ENCODE measurements at regions of chr2 and their contacts with region 1.

Region 1: GRCh38 chr2:169131587-169132512 is 62.5 kb downstream of the DHRS9 start:
- DNase-seq: no peak
- ATAC-seq: peak; percentile 96
- H3K4me3 Mint-ChIP-seq: no peak overlapping the region
- H3K27ac Mint-ChIP-seq: no peak overlapping the region
- H3K4me1 Mint-ChIP-seq: peaks cover 2% of the 10 kb centered on the region
- H3K27me3 Mint-ChIP-seq: no peaks in the 10 kb centered on the region
- CTCF ChIP-seq: peak; percentile 88

Region 2: GRCh38 chr2:168976034-168976654 is 155.7 kb before region 1 on chr2:
- CTCF ChIA-PET with region 1: interaction called, 12 read pairs
- POLR2A ChIA-PET with region 1: no interaction called
- intact Hi-C with region 1: no loop called
- DNase-seq: peak; percentile 7
- ATAC-seq: peak; percentile 50
- H3K4me3 Mint-ChIP-seq: no peak overlapping the region
- H3K27ac Mint-ChIP-seq: no peak overlapping the region
- H3K4me1 Mint-ChIP-seq: no peaks in the 10 kb centered on the region
- H3K27me3 Mint-ChIP-seq: no peaks in the 10 kb centered on the region
- CTCF ChIP-seq: no peak

Region 3: DNA sequence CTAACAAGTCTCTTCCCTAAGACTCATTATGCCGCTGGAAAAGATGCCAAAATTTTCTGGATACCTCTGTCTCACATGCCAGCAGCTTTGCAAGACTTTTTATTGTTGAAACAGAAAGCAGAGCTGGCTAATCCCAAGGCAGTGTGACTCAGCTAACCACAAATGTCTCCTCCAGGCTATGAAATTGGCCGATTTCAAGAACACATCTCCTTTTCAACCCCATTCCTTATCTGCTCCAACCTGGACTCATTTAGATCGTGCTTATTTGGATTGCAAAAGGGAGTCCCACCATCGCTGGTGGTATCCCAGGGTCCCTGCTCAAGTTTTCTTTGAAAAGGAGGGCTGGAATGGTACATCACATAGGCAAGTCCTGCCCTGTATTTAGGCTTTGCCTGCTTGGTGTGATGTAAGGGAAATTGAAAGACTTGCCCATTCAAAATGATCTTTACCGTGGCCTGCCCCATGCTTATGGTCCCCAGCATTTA is 36.2 kb before region 1 on chr2:
- CTCF ChIA-PET with region 1: interaction called, 16 read pairs
- POLR2A ChIA-PET with region 1: no interaction called
- intact Hi-C with region 1: no loop called
- DNase-seq: peak; percentile 20
- ATAC-seq: peak; percentile 61
- H3K4me3 Mint-ChIP-seq: no peak overlapping the region
- H3K27ac Mint-ChIP-seq: no peak overlapping the region
- H3K4me1 Mint-ChIP-seq: peaks cover 13% of the 10 kb centered on the region
- H3K27me3 Mint-ChIP-seq: no peaks in the 10 kb centered on the region
- CTCF ChIP-seq: no peak